CD4-positive, alpha-beta memory T cell (primary cell): ENCODE measurements at regions of chr6 and their contacts with region 1.

Region 1: GRCh38 chr6:131231103-131231502 is 95.8 kb downstream of the AKAP7 start:
- DNase-seq: no peak
- H3K4me3 ChIP-seq: no peak overlapping the region
- H3K4me3 Mint-ChIP-seq: no peak overlapping the region
- H3K27ac ChIP-seq: no peak overlapping the region
- H3K27ac Mint-ChIP-seq: peak overlapping the region in 3 of 7 donors; percentile 5 to 59 (median 25)
- H3K4me1 ChIP-seq: no peaks in the 10 kb centered on the region
- H3K4me1 Mint-ChIP-seq: peaks cover 5 to 22% (median 15%) of the 10 kb centered on the region in 4 donors
- H3K27me3 ChIP-seq: no peaks in the 10 kb centered on the region
- H3K27me3 Mint-ChIP-seq: no peaks in the 10 kb centered on the region

Region 2: GRCh38 chr6:130825772-130826441 is 405.2 kb before region 1 on chr6:
- CTCF ChIA-PET with region 1: no interaction called
- POLR2A ChIA-PET with region 1: no interaction called
- intact Hi-C with region 1: no loop called
- DNase-seq: no peak
- H3K4me3 ChIP-seq: no peak overlapping the region
- H3K4me3 Mint-ChIP-seq: no peak overlapping the region
- H3K27ac ChIP-seq: no peak overlapping the region
- H3K27ac Mint-ChIP-seq: no peak overlapping the region
- H3K4me1 ChIP-seq: no peaks in the 10 kb centered on the region
- H3K4me1 Mint-ChIP-seq: peaks cover 0 to 4% (median 2%) of the 10 kb centered on the region in 4 donors
- H3K27me3 ChIP-seq: no peaks in the 10 kb centered on the region
- H3K27me3 Mint-ChIP-seq: peaks cover 0 to 1% of the 10 kb centered on the region in 2 donors

Region 3: DNA sequence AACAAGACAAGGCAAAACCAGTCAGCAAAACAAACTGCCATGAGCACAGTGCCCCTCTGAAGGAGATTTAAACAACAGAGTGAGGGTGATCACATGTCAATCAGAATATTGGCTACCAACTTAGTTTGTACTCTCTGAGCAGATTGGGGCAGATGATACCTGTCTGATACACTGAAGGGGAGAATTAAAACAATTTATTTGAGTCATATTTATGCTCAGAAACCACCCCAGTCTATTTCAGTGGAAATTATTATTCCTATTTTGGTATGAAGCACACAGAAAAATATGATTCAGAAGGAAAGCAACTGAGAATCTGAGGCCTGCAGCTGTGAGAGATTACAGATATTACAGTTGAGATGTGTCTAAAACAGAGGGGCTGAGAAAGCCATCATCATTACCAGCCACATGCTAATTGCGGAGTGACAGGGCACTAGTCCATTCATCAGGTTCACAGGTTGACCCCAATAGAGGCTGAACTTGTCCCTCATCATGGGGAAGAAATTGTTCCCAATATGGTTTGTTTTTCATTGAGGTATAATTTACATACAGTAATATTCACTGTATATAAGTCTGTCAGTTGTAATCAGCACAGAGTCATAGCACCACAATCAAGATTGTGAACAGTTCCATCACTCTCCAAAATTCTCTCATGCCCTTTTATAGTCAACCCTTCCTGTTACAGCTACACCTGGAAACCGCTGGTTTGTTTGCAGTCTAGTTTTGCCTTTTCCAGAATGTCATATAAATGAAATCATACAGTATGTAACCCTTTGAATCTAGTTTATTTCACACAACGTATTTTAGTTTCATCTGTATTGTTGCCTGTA is 38.7 kb after region 1 on chr6:
- CTCF ChIA-PET with region 1: no interaction called
- POLR2A ChIA-PET with region 1: no interaction called
- intact Hi-C with region 1: loop called (anchors 5 kb)
- DNase-seq: no peak
- H3K4me3 ChIP-seq: no peak overlapping the region
- H3K4me3 Mint-ChIP-seq: no peak overlapping the region
- H3K27ac ChIP-seq: no peak overlapping the region
- H3K27ac Mint-ChIP-seq: peak overlapping the region in 2 of 7 donors; percentile 15 to 25
- H3K4me1 ChIP-seq: no peaks in the 10 kb centered on the region
- H3K4me1 Mint-ChIP-seq: peaks cover 14 to 17% (median 16%) of the 10 kb centered on the region in 4 donors
- H3K27me3 ChIP-seq: no peaks in the 10 kb centered on the region
- H3K27me3 Mint-ChIP-seq: no peaks in the 10 kb centered on the region